ENCODE measurements at regions of chr16 and their contacts with region 1.

Region 1: GRCh38 chr16:75402821-75403475 is 30.4 kb downstream of the CFDP1 start:
- DNase-seq: peak in 4 of 5 donors; percentile 23 to 35 (median 32)
- H3K4me3 ChIP-seq: no peak overlapping the region
- H3K4me3 Mint-ChIP-seq: no peak overlapping the region
- H3K27ac ChIP-seq: no peak overlapping the region
- H3K27ac Mint-ChIP-seq: peak overlapping the region in 1 of 7 donors; percentile 51
- H3K4me1 ChIP-seq: no peaks in the 10 kb centered on the region
- H3K4me1 Mint-ChIP-seq: peaks cover 0 to 3% (median 1%) of the 10 kb centered on the region in 4 donors
- H3K27me3 ChIP-seq: no peaks in the 10 kb centered on the region
- H3K27me3 Mint-ChIP-seq: no peaks in the 10 kb centered on the region

Region 2: DNA sequence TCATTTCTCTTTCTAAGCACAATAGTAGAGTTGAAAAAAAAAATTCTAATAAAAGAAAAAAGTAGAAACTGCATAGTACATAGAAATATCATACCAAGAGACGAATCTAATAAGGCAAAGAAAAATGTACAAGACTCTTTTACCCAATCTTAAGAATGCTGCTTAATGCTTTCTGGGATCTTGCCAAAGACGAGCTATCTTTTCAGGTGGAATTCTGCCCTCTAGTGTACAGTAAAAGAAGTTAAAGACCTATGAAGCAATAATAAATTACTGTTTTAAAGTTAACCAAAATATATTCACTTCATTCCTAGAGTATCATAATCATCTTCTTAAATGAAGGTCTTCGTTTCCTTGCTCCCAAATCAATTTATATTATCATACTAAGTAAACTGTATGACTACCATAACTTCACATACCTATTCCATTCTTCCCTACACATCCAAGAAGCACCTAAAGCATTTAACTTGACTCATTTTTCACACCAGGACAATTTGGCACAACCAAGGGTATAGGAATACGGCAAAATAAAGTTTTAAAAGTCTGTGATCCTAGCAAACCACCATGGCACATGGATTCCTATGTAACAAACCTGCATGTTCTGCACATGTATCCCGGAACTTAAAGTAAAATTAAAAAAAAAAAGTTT is 17.3 kb before region 1 on chr16:
- CTCF ChIA-PET with region 1: interaction called, 12 read pairs
- POLR2A ChIA-PET with region 1: interaction called, 3 read pairs
- intact Hi-C with region 1: no loop called
- DNase-seq: peak in 4 of 5 donors; percentile 53 to 63 (median 60)
- H3K4me3 ChIP-seq: no peak overlapping the region
- H3K4me3 Mint-ChIP-seq: no peak overlapping the region
- H3K27ac ChIP-seq: no peak overlapping the region
- H3K27ac Mint-ChIP-seq: no peak overlapping the region
- H3K4me1 ChIP-seq: peaks cover 26% of the 10 kb centered on the region
- H3K4me1 Mint-ChIP-seq: peaks cover 20 to 38% (median 34%) of the 10 kb centered on the region in 4 donors
- H3K27me3 ChIP-seq: no peaks in the 10 kb centered on the region
- H3K27me3 Mint-ChIP-seq: no peaks in the 10 kb centered on the region

Region 3: DNA sequence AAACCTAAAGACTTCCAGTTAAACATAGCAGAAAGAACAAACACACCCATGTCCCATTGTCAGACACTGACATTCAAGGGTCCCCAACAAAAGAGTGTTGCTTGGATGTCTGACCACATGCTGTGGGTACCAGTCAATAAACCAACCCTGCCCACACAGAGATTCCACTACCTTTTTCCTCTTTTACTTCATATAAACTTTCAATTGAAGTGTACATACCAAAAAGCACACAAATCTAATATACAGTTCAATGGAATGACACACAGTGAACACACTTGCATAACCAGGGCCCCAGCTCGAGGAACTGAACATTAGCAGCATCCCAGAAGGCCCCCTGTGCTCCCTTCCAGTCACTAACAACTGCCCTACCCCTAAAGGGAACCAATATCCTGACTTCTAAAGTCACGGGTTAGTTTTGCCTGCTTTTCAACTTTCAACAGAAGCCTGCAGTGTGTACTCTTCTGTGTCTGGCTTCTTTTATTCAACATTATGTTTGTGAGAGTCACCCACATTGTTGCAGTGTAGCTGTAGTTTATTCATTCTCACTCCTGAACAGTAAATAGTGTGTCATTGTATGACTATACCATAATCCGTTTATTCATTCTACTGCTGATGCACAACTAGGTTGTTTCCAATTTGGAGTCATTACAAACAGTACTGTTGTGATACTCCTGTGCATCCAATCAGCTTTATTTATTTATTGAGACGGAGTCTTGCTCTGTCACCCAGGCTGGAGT is 12.4 kb after region 1 on chr16:
- CTCF ChIA-PET with region 1: interaction called, 15 read pairs
- POLR2A ChIA-PET with region 1: no interaction called
- intact Hi-C with region 1: loop called (anchors 2 kb)
- DNase-seq: no peak
- H3K4me3 ChIP-seq: no peak overlapping the region
- H3K4me3 Mint-ChIP-seq: no peak overlapping the region
- H3K27ac ChIP-seq: no peak overlapping the region
- H3K27ac Mint-ChIP-seq: peak overlapping the region in 3 of 7 donors; percentile 52 to 84 (median 71)
- H3K4me1 ChIP-seq: peaks cover 3% of the 10 kb centered on the region
- H3K4me1 Mint-ChIP-seq: peaks cover 9 to 18% (median 11%) of the 10 kb centered on the region in 4 donors
- H3K27me3 ChIP-seq: no peaks in the 10 kb centered on the region
- H3K27me3 Mint-ChIP-seq: no peaks in the 10 kb centered on the region

Region 4: GRCh38 chr16:75420987-75421819 is 18.3 kb after region 1 on chr16:
- CTCF ChIA-PET with region 1: interaction called, 4 read pairs
- POLR2A ChIA-PET with region 1: no interaction called
- intact Hi-C with region 1: loop called (anchors 2 kb)
- DNase-seq: no peak
- H3K4me3 ChIP-seq: no peak overlapping the region
- H3K4me3 Mint-ChIP-seq: peak overlapping the region in 7 of 8 donors; percentile 9 to 70 (median 33)
- H3K27ac ChIP-seq: no peak overlapping the region
- H3K27ac Mint-ChIP-seq: peak overlapping the region; percentile 37 to 82 (median 54)
- H3K4me1 ChIP-seq: peaks cover 18% of the 10 kb centered on the region
- H3K4me1 Mint-ChIP-seq: peaks cover 16 to 33% (median 27%) of the 10 kb centered on the region in 4 donors
- H3K27me3 ChIP-seq: no peaks in the 10 kb centered on the region
- H3K27me3 Mint-ChIP-seq: no peaks in the 10 kb centered on the region